Posterior vena cava (tissue), 2 donors: ENCODE measurements at regions of chr6 and their contacts with region 1.

Region 1: DNA sequence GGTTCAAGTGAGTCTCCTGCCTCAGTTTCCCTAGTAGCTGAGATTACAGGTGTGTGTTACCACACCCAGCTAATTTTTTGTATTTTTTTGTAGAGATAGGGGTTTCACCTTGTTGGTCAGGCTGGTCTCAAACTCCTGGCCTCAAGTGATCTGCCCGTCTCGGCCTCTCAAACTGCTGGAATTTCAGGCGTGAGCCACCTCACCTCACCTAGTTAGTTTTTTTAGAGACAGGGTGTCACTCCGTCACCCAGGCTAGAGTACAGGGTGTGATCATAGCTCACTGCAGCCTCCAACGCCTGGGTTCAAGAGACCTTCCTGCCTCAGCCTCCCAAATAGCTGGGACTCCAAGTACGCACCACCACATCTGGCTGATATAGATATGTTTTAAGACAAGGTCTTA is 22.9 kb downstream of the SYTL3 start:
- DNase-seq: no peak

Region 2: GRCh38 chr6:158715964-158716311 is 43.2 kb after region 1 on chr6:
- intact Hi-C with region 1: loop called in 1 of 2 experiments (anchors 1 kb)
- DNase-seq: no peak